Gastrocnemius medialis (tissue), 4 donors: ENCODE measurements at regions of chr11 and their contacts with region 1.

Region 1: DNA sequence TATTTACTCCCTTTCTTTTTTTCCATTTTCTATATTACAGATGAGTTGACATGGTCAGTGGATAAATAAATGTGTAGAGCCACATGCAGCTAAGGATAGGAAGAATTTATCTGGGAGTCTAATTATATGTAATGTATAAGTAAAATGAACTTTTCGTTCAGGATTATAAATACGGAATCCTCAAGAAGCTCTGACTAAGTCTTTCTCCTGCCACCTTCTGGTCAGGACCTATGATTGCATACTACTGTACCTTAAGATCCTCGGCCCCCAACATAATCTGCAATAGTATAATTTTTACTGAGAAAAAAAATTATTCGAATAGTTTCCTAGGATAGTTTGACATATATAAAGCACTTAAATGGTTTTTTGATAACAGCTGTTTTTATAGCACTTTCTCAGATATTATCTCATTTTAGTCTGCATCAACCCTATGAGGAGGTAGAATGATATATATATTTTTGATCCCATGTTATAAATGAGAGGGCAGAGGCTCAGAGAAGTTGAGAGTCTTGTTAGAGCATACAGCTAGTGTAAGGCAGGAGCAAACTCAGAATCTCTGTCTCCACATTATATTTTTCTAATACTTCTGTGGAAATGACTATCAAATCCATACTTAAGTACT is 36.1 kb downstream of the CCDC90B start:
- DNase-seq: no peak
- ATAC-seq: peak in 1 of 2 donors; percentile 72
- H3K4me3 ChIP-seq: no peak overlapping the region
- H3K27ac ChIP-seq: no peak overlapping the region
- H3K4me1 ChIP-seq: no peaks in the 10 kb centered on the region
- H3K27me3 ChIP-seq: no peaks in the 10 kb centered on the region
- CTCF ChIP-seq: peak; percentile 45 to 69 (median 63)
- POLR2A ChIP-seq: no peak

Region 2: DNA sequence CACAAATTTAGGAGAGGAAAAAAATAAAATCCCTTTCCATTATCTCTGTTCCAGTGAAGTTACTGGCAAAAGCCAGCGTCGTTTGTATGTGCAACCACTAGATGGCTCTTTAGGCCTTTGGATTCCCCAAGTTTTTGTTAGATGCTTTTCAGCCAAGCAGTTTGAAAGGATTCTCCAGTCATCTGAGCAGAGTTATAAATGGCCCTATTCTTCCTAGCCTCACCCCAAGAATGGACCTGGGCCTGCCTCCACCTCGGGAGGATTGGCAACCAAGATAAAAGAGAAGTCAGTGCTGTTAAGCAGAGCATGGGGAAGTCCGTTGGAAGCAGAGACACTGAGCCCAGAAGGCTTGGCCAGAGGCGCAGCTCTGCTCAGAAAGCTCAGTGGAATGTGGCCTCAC is 531.8 kb before region 1 on chr11:
- in situ Hi-C with region 1: loop called in 1 of 4 experiments (anchors 10 kb)
- intact Hi-C with region 1: no loop called
- DNase-seq: no peak
- ATAC-seq: peak; percentile 61 to 75
- H3K4me3 ChIP-seq: no peak overlapping the region
- H3K27ac ChIP-seq: no peak overlapping the region
- H3K4me1 ChIP-seq: no peaks in the 10 kb centered on the region
- H3K27me3 ChIP-seq: no peaks in the 10 kb centered on the region
- CTCF ChIP-seq: peak; percentile 24 to 71 (median 54)
- POLR2A ChIP-seq: no peak

Region 3: DNA sequence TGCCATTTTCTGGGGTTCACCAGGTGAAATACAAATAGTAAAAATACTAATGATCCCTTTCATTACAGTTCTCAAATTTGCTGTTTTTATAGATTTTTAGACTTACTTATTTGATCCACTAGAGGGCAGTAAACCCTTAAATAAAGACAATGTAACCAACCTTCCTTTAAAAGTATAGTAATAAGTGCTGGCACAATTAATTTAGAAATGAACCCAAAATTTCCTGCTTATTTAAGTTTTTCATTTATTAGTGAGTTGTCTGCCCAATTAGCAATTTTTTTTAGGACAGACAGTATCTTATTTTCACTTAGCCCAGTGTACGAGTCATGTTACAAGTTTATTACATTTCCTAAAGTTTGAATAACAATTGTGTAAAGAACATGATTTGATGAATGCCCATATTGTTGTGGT is 343.8 kb before region 1 on chr11:
- in situ Hi-C with region 1: loop called (anchors 5 to 25 kb)
- intact Hi-C with region 1: loop called (anchors 1 kb)
- DNase-seq: no peak
- ATAC-seq: no peak
- H3K4me3 ChIP-seq: no peak overlapping the region
- H3K27ac ChIP-seq: no peak overlapping the region
- H3K4me1 ChIP-seq: peaks cover 4% of the 10 kb centered on the region in 2 donors
- H3K27me3 ChIP-seq: no peaks in the 10 kb centered on the region
- CTCF ChIP-seq: peak; percentile 40 to 70 (median 64)
- POLR2A ChIP-seq: no peak

Region 4: GRCh38 chr11:83097429-83098075 is 152.5 kb before region 1 on chr11:
- in situ Hi-C with region 1: no loop called
- intact Hi-C with region 1: no loop called
- DNase-seq: no peak
- ATAC-seq: no peak
- H3K4me3 ChIP-seq: no peak overlapping the region
- H3K27ac ChIP-seq: no peak overlapping the region
- H3K4me1 ChIP-seq: peaks cover 11 to 14% of the 10 kb centered on the region in 2 donors
- H3K27me3 ChIP-seq: no peaks in the 10 kb centered on the region
- CTCF ChIP-seq: no peak
- POLR2A ChIP-seq: no peak

Region 5: DNA sequence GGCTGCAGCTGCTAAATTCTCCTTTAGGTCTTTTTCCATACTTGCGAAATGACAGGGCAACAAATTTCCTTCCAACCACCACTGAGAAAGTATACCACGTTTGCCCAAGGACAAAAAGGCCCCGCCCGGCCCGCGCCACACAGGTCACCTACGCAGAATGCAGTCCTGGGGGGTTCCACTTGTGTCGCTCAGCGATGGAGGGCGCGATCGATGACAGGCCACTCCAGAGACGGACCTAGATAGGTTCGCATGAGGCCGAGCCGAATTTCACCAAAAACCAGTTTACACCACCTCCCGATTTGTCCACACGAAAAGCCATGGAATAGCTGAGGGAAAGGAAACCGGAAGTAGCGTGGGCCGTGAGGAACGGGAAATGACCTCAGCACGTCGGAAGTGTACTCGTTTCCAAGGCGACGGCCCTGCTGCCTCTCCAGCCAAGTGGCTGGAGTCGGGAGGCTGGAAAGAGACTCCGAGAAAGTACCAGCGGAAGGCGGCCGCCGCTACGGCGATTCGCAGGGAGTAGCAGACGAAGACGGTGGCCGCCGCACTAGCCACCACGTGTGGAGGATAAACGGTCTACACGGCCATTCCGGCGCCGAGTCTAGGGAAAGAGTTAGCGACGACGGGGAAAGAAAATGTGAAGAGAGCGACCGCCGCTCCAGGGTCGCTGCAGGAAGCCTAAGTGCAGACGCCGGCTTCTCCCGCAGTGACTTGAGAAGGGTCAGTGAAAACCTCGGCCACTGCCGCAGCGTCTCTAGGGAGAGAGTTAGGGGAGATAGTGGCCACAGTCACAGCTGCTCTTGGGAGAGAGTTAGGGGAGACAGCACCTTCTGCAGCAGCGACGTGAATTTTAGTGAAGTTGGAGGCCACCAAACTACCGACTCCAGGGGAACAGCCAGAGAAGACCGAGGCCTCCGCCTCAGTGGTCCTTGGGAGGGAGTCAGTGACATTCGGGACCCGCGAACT is 56.5 kb before region 1 on chr11 and contains the start of gene ANKRD42:
- in situ Hi-C with region 1: no loop called
- intact Hi-C with region 1: loop called (anchors 5 kb)
- DNase-seq: peak; percentile 91
- ATAC-seq: peak; percentile 98 to 99
- H3K4me3 ChIP-seq: peak within 1 kb of the TSS; percentile 72 to 87 (median 84)
- H3K27ac ChIP-seq: peak within 1 kb of the TSS; percentile 84 to 95 (median 90)
- H3K4me1 ChIP-seq: peaks cover 18 to 23% of the 10 kb centered on the region in 2 donors
- H3K27me3 ChIP-seq: no peaks in the 10 kb centered on the region
- CTCF ChIP-seq: peak in 1 of 5 experiments; percentile 17
- POLR2A ChIP-seq: peak; percentile 50 to 78
- total RNA-seq, gene ANKRD42: 2.1 to 3.7 (median 3.4) TPM